ENCODE measurements at regions of chr17 and their contacts with region 1.

Region 1: DNA sequence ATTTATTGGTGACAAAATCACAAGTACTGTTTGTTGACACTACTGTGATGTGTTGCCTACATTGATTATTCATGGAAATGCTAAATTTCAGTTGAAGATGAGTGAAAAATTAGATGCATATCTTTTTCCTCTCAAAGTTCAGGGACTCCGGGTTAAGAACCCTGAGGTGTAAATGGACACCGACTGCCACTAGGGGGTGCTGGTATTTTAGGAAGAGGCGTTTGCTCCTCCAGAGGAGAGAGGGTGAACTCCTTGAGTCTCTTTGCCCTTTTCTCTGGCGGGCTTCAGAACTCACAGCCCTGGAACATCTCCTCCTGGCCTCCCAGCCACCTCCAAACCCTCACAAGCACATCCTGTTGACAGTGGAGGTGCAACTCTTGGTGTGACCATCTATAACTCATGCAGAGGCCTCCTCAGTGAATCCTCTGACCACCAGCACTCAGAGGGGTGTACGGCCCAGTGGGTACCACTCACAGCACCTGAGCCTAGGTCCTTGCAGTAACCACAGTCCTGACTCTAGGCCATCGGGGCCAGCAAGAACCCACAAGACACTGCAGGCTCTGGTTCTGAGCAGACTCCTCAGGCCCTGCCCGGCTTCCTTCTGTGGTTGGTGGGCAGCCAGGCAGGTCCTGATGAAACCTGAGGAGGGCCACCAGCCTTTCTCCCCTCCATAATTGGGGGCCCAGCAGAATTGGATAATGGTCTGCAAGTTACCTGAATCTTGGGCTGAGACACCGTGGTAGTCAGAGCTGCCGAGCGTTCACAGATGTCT is 26.2 kb upstream of the PIK3R5 start:
- DNase-seq: peak; percentile 29
- H3K4me3 ChIP-seq: no peak overlapping the region
- H3K27ac ChIP-seq: no peak overlapping the region
- H3K4me1 ChIP-seq: no peaks in the 10 kb centered on the region
- H3K27me3 ChIP-seq: peaks cover 36% of the 10 kb centered on the region
- CTCF ChIP-seq: peak; percentile 80

Region 2: DNA sequence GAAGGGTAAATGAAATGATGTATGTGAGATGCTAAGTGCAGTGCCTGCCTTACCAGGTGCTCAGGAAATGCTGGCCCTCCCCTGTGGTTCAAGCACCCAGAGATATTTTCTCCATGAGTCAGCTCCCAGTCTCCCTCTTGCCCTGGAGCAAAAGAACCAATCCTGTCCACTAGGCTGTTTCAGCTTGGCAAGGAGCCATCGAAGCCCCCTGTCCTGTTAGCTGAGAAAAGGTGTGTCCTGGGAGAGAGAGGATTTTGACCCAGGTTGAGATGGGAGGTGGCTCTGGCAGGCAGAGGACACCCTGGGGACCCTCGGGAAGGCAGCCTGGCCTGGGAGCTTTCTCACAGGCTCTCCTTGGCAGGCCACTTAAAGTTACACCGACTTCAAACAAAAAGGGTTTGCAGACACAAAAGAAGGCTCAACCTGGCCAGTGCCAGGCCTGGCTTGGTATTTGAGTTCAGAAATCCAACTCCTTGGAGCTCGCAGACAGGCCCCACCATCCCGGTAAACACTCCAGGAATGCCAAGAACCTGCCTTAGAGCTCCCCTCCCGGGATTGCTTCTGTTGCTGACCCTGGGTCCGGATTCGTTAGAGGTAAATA is 59.2 kb after region 1 on chr17:
- intact Hi-C with region 1: no loop called
- DNase-seq: no peak
- H3K4me3 ChIP-seq: no peak overlapping the region
- H3K27ac ChIP-seq: no peak overlapping the region
- H3K4me1 ChIP-seq: no peaks in the 10 kb centered on the region
- H3K27me3 ChIP-seq: no peaks in the 10 kb centered on the region
- CTCF ChIP-seq: no peak

Region 3: GRCh38 chr17:9291912-9292560 is 300.3 kb after region 1 on chr17:
- intact Hi-C with region 1: loop called (anchors 10 kb)
- DNase-seq: peak; percentile 36
- H3K4me3 ChIP-seq: no peak overlapping the region
- H3K27ac ChIP-seq: no peak overlapping the region
- H3K4me1 ChIP-seq: peaks cover 13% of the 10 kb centered on the region
- H3K27me3 ChIP-seq: no peaks in the 10 kb centered on the region
- CTCF ChIP-seq: peak; percentile 90